ENCODE measurements at regions of chr3 and their contacts with region 1.

Region 1: GRCh38 chr3:43855674-43856299 is 165.0 kb downstream of the ABHD5 start:
- DNase-seq: peak; percentile 30 to 40
- ATAC-seq: peak in 7 of 8 donors; percentile 53 to 89 (median 73)
- H3K4me3 ChIP-seq: no peak overlapping the region
- H3K27ac ChIP-seq: no peak overlapping the region
- H3K4me1 ChIP-seq: no peaks in the 10 kb centered on the region
- H3K27me3 ChIP-seq: peaks cover 0 to 55% (median 42%) of the 10 kb centered on the region in 7 donors
- CTCF ChIP-seq: peak; percentile 21 to 69 (median 59)

Region 2: DNA sequence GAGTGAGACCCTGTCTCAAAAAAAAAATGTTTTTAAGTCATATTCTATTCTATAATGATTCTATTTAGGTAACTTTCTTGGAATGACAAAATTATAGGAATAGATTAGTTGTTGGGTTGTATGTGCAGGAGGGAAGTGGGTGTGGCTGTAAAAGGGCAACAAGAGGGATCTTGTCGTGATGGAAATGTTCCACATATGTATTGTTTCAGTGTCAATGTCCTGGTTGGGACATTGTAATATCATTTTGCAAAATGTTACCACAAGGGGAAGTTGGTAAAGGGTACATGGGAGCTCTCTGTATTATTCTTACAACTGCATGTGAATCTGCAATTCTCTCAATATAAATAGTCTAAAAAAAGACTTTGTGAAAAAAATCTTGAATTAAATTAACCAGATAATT is 179.3 kb before region 1 on chr3:
- intact Hi-C with region 1: no loop called
- DNase-seq: no peak
- ATAC-seq: no peak
- H3K4me3 ChIP-seq: no peak overlapping the region
- H3K27ac ChIP-seq: no peak overlapping the region
- H3K4me1 ChIP-seq: no peaks in the 10 kb centered on the region
- H3K27me3 ChIP-seq: no peaks in the 10 kb centered on the region
- CTCF ChIP-seq: no peak

Region 3: GRCh38 chr3:44003801-44004200 is 148.0 kb after region 1 on chr3:
- intact Hi-C with region 1: no loop called
- DNase-seq: no peak
- ATAC-seq: no peak
- H3K4me3 ChIP-seq: no peak overlapping the region
- H3K27ac ChIP-seq: no peak overlapping the region
- H3K4me1 ChIP-seq: peaks cover 1 to 10% (median 6%) of the 10 kb centered on the region in 9 donors
- H3K27me3 ChIP-seq: peaks cover 11 to 88% (median 72%) of the 10 kb centered on the region in 7 donors
- CTCF ChIP-seq: no peak

Region 4: GRCh38 chr3:44160818-44161217 is 305.0 kb after region 1 on chr3:
- intact Hi-C with region 1: loop called in 1 of 10 experiments (anchors 10 kb)
- DNase-seq: no peak
- ATAC-seq: no peak
- H3K4me3 ChIP-seq: no peak overlapping the region
- H3K27ac ChIP-seq: no peak overlapping the region
- H3K4me1 ChIP-seq: no peaks in the 10 kb centered on the region
- H3K27me3 ChIP-seq: peaks cover 0 to 17% (median 3%) of the 10 kb centered on the region in 7 donors
- CTCF ChIP-seq: no peak

Region 5: GRCh38 chr3:44198284-44199269 is 342.8 kb after region 1 on chr3:
- intact Hi-C with region 1: loop called in 5 of 10 experiments (anchors 5 to 10 kb)
- DNase-seq: peak; percentile 18 to 78
- ATAC-seq: peak in 6 of 8 donors; percentile 73 to 82 (median 80)
- H3K4me3 ChIP-seq: no peak overlapping the region
- H3K27ac ChIP-seq: no peak overlapping the region
- H3K4me1 ChIP-seq: no peaks in the 10 kb centered on the region
- H3K27me3 ChIP-seq: peaks cover 0 to 42% (median 10%) of the 10 kb centered on the region in 7 donors
- CTCF ChIP-seq: peak; percentile 60 to 86 (median 82)

Region 6: GRCh38 chr3:44208086-44208485 is 352.3 kb after region 1 on chr3:
- intact Hi-C with region 1: loop called in 2 of 10 experiments (anchors 5 to 10 kb)
- DNase-seq: no peak
- ATAC-seq: no peak
- H3K4me3 ChIP-seq: no peak overlapping the region
- H3K27ac ChIP-seq: no peak overlapping the region
- H3K4me1 ChIP-seq: no peaks in the 10 kb centered on the region
- H3K27me3 ChIP-seq: peaks cover 0 to 41% (median 6%) of the 10 kb centered on the region in 7 donors
- CTCF ChIP-seq: no peak

Measured in heart right ventricle (tissue), 16 donors.